Activated CD4-positive, alpha-beta T cell treated with anti-CD3 and anti-CD28 coated beads for 36 hours (primary cell): ENCODE measurements at regions of chr1 and their contacts with region 1.

Region 1: GRCh38 chr1:8540261-8540941 is 222.5 kb downstream of the SLC45A1 start:
- DNase-seq: no peak
- ATAC-seq: peak; percentile 84
- H3K4me3 Mint-ChIP-seq: no peak overlapping the region
- H3K27ac Mint-ChIP-seq: peak overlapping the region; percentile 80
- H3K4me1 Mint-ChIP-seq: peaks cover 32% of the 10 kb centered on the region
- H3K27me3 Mint-ChIP-seq: no peaks in the 10 kb centered on the region

Region 2: GRCh38 chr1:8423650-8424538 is 116.5 kb before region 1 on chr1:
- CTCF ChIA-PET with region 1: no interaction called
- POLR2A ChIA-PET with region 1: no interaction called
- intact Hi-C with region 1: no loop called
- DNase-seq: peak; percentile 77
- ATAC-seq: peak; percentile 66
- H3K4me3 Mint-ChIP-seq: peak overlapping the region; percentile 84
- H3K27ac Mint-ChIP-seq: peak overlapping the region; percentile 97
- H3K4me1 Mint-ChIP-seq: peaks cover 42% of the 10 kb centered on the region
- H3K27me3 Mint-ChIP-seq: no peaks in the 10 kb centered on the region

Region 3: DNA sequence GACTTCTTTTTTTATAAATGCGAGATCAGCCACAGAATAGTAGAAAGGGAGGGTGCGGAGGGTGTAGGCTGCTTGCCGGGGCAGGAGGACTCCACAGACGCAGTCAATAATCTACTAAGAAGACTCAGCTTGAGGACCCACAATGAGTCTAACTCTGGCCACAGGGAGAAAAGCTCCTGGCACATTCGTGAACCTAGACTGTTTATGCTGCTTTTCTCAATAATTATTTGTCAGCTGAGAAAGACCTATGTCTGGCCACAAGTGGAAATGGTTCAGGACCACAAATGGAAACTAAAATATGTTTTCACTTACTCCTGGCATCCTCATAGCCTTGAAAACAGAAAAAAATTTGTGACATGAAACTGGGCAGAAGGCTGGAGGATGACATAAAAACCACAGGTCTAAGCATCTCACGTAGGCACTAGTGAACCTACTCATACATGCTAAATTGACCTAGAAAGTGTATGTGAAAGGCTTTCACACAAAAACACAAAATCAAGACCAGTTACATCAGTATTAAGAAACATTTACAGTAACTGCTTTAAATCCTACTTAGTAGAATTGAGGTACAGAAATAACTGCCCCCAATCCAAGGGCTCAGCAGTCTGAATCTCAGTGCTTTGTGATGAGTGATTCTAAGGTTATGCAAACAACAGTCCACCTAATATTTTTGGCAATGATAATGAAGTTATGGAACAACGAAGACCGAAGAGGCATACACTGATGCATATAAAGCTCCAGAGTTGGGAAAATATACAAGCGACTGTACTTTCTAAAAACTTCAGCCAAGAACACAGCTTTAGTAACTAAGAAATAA is 63.0 kb before region 1 on chr1:
- CTCF ChIA-PET with region 1: no interaction called
- POLR2A ChIA-PET with region 1: no interaction called
- intact Hi-C with region 1: loop called in 1 of 2 experiments (anchors 1 kb)
- DNase-seq: peak; percentile 45
- ATAC-seq: peak; percentile 77
- H3K4me3 Mint-ChIP-seq: no peak overlapping the region
- H3K27ac Mint-ChIP-seq: peak overlapping the region; percentile 85
- H3K4me1 Mint-ChIP-seq: peaks cover 49% of the 10 kb centered on the region
- H3K27me3 Mint-ChIP-seq: no peaks in the 10 kb centered on the region

Region 4: DNA sequence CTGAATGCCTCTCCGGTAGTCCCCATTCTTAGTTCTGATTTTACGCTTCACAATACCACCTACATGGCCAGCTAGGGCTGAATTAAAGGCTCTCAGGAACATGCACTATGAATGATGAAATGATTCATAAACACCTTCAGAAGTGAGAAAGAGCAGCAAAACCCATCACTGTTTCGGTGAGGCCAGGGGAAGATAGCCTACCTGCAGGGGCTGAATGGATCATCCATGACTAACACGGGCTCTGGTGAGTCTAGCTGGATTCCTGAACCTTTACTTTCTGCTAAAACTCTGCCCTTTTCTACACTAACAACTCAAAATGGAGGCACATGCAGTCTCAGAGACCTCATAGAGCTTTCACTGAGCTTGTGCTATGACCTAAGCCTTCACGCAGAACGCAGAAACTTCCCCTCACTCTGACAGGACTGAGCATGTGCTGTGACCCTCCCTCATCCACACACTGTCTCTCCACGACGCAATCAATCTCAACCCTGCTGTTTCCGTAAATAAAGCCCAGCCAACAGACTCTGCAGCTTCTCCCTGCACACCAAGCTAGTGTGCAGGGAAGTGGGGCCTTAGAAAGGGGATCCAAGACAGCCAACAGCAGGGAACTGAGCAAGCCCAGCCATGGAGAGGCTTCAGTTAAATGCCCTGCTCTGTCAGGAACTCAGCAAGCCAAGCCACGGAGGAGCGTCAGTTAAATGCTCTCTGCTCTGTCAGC is 14.7 kb before region 1 on chr1:
- CTCF ChIA-PET with region 1: no interaction called
- POLR2A ChIA-PET with region 1: no interaction called
- intact Hi-C with region 1: loop called (anchors 1 kb)
- DNase-seq: peak; percentile 85
- ATAC-seq: peak; percentile 94
- H3K4me3 Mint-ChIP-seq: no peak overlapping the region
- H3K27ac Mint-ChIP-seq: no peak overlapping the region
- H3K4me1 Mint-ChIP-seq: peaks cover 24% of the 10 kb centered on the region
- H3K27me3 Mint-ChIP-seq: no peaks in the 10 kb centered on the region

Region 5: DNA sequence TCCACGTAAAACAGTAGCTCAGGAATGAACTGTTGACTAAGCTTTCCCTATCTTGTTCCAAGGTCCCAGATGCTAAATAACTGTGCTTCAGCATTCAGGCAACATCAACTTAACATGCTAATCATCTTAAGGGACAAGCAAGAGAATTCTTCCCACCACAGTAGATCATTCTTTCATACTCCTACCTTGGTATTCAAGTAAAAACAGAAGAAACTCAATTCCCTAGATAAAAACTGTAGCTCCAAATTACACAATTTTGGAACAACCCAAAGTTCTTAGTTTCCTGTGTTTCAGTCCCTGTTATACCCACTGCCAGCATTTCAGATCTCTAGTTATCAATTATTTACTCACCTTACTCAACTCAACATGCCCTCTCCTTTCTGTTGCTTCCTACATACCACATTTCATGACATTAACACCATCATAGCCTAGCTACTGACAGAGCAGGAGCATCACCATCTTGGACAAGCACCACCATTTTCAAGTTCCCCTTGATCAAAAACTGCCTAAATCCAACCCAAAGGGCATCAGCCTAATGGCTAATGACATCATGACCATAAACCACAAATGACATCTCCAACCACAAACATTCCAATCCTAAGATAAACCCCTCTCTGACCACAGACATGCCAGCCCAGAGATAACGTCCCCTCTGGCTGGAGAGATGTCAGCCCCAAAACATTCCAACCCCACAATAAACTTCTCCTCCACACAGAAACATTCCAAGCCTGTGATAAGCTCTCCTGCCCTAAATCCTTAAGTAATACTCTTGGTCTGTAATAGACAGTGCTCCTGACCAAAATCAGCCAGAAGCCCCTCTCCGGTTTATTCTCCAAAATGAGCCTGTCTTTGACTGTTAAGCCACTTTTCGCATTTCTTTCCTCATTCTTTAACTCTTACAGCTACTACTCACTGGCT is 85.8 kb after region 1 on chr1:
- CTCF ChIA-PET with region 1: no interaction called
- POLR2A ChIA-PET with region 1: no interaction called
- intact Hi-C with region 1: no loop called
- DNase-seq: no peak
- ATAC-seq: no peak
- H3K4me3 Mint-ChIP-seq: no peak overlapping the region
- H3K27ac Mint-ChIP-seq: no peak overlapping the region
- H3K4me1 Mint-ChIP-seq: peaks cover 49% of the 10 kb centered on the region
- H3K27me3 Mint-ChIP-seq: no peaks in the 10 kb centered on the region

Region 6: GRCh38 chr1:8671306-8671917 is 131.0 kb after region 1 on chr1:
- CTCF ChIA-PET with region 1: interaction called, 4 read pairs
- POLR2A ChIA-PET with region 1: no interaction called
- intact Hi-C with region 1: loop called in 1 of 2 experiments (anchors 5 kb)
- DNase-seq: peak; percentile 26
- ATAC-seq: no peak
- H3K4me3 Mint-ChIP-seq: no peak overlapping the region
- H3K27ac Mint-ChIP-seq: no peak overlapping the region
- H3K4me1 Mint-ChIP-seq: peaks cover 62% of the 10 kb centered on the region
- H3K27me3 Mint-ChIP-seq: no peaks in the 10 kb centered on the region

Region 7: DNA sequence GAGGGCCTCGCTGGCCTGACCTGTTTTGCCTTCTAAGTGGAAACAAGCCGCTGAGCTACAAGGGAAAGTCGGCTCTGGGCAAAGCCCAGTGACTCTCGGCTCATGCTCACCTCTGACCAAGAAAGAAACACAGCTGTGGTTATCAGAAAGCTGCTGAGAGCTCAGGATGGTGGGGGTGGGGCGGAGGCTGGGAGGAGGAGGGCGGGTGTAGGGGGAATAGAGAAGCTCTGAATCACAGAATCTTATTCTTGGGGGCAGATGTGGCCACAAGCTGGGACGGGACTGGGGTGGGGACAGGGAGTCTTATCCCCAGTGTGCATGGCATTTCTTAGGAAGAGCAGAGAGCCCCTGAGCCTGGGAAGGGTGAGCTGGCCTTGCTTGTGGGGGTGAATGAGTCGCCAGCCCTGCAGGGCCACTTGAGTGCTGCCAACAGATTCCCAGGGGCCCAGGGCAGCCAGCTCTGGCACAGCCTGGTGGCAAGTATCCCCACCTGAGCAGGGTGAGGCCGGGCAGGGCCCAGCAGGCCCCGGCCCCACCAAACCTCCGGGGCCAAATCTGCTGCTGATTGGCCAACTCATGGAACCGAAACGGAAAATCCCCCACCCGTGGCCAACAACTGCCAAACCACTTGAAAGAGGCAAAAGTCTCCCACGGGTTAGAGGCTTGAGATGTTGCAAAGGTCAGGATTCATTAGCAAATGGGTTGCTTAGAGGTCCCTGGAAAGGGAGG is 872.9 kb after region 1 on chr1:
- CTCF ChIA-PET with region 1: no interaction called
- POLR2A ChIA-PET with region 1: no interaction called
- intact Hi-C with region 1: no loop called
- DNase-seq: peak; percentile 90
- ATAC-seq: peak; percentile 89
- H3K4me3 Mint-ChIP-seq: no peak overlapping the region
- H3K27ac Mint-ChIP-seq: peak overlapping the region; percentile 55
- H3K4me1 Mint-ChIP-seq: peaks cover 50% of the 10 kb centered on the region
- H3K27me3 Mint-ChIP-seq: peaks cover 3% of the 10 kb centered on the region